Gastrocnemius medialis (tissue), 4 donors: ENCODE measurements at regions of chr6 and their contacts with region 1.

Region 1: GRCh38 chr6:160297310-160297709 is 38.7 kb upstream of the SLC22A2 start:
- DNase-seq: no peak
- ATAC-seq: peak in 1 of 2 donors; percentile 38
- H3K4me3 ChIP-seq: no peak overlapping the region
- H3K27ac ChIP-seq: no peak overlapping the region
- H3K4me1 ChIP-seq: peaks cover 8 to 16% of the 10 kb centered on the region in 2 donors
- H3K27me3 ChIP-seq: no peaks in the 10 kb centered on the region
- CTCF ChIP-seq: peak in 1 of 5 experiments; percentile 42
- POLR2A ChIP-seq: no peak

Region 2: DNA sequence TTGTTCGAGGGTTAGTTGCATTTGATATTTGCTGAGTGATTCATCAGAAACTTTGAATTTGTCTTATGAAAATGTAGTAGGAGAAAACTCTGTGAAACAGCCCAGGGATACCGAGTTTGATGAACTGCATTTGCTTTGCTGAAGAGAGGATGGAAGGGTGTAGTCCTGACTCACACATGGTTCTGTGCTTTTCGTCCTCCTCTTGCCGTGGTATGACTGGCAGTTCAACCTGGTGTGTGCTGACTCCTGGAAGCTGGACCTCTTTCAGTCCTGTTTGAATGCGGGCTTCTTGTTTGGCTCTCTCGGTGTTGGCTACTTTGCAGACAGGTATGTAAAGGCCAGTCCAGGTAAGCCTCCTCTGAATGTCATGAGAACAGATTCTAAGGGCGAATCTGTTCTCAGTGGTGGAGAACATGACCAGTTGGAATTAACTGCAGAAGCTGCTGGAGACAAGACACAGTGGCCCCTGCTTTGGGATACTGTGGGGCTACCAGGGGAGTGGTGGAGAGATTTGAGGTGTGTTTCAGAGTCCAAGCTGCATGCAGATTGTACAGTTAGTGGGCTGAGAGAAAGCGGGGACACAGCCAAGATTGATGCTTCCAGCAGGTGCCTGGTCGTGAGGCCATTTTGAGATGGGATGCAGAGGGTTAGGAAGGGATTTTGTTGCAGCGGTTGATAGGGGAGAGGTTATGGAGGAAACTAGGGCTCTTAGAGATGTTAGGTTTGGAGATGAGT is 167.3 kb before region 1 on chr6:
- in situ Hi-C with region 1: no loop called
- intact Hi-C with region 1: no loop called
- DNase-seq: no peak
- ATAC-seq: no peak
- H3K4me3 ChIP-seq: no peak overlapping the region
- H3K27ac ChIP-seq: no peak overlapping the region
- H3K4me1 ChIP-seq: no peaks in the 10 kb centered on the region
- H3K27me3 ChIP-seq: no peaks in the 10 kb centered on the region
- CTCF ChIP-seq: no peak
- POLR2A ChIP-seq: no peak

Region 3: GRCh38 chr6:160221423-160221822 is 75.9 kb before region 1 on chr6:
- in situ Hi-C with region 1: no loop called
- intact Hi-C with region 1: loop called (anchors 5 kb)
- DNase-seq: no peak
- ATAC-seq: peak; percentile 47 to 74
- H3K4me3 ChIP-seq: no peak overlapping the region
- H3K27ac ChIP-seq: no peak overlapping the region
- H3K4me1 ChIP-seq: no peaks in the 10 kb centered on the region
- H3K27me3 ChIP-seq: peaks cover 0 to 6% (median 0%) of the 10 kb centered on the region in 3 donors
- CTCF ChIP-seq: peak in 4 of 5 experiments; percentile 12 to 28 (median 23)
- POLR2A ChIP-seq: no peak

Region 4: GRCh38 chr6:160275511-160276003 is 21.8 kb before region 1 on chr6:
- in situ Hi-C with region 1: no loop called
- intact Hi-C with region 1: no loop called
- DNase-seq: peak; percentile 82 to 95
- ATAC-seq: peak; percentile 89 to 90
- H3K4me3 ChIP-seq: no peak overlapping the region
- H3K27ac ChIP-seq: peak overlapping the region; percentile 77 to 86 (median 80)
- H3K4me1 ChIP-seq: peaks cover 30 to 31% of the 10 kb centered on the region in 2 donors
- H3K27me3 ChIP-seq: no peaks in the 10 kb centered on the region
- CTCF ChIP-seq: no peak
- POLR2A ChIP-seq: peak; percentile 18 to 47

Region 5: DNA sequence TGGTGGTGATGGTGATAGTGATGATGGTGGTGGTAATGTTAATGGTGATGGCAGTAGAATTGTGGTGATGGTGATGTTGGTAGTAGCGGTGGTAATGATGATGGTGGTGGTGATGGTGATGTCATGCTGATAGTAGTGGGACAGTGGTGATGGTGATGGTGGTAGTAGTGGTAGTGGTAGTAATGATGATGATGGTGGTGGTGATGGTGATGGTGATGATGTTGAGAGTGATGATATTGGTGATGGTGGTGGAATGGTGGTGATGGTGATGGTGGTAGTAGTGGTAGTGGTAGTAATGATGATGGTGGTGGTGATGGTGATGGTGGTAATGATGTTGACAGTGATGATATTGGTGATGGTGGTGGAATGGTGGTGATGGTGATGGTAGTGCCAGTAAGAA is 238.0 kb after region 1 on chr6:
- in situ Hi-C with region 1: no loop called
- intact Hi-C with region 1: no loop called
- DNase-seq: no peak
- ATAC-seq: no peak
- H3K4me3 ChIP-seq: no peak overlapping the region
- H3K27ac ChIP-seq: no peak overlapping the region
- H3K4me1 ChIP-seq: peaks cover 0 to 3% of the 10 kb centered on the region in 2 donors
- H3K27me3 ChIP-seq: peaks cover 0 to 3% (median 0%) of the 10 kb centered on the region in 3 donors
- CTCF ChIP-seq: no peak
- POLR2A ChIP-seq: no peak

Region 6: DNA sequence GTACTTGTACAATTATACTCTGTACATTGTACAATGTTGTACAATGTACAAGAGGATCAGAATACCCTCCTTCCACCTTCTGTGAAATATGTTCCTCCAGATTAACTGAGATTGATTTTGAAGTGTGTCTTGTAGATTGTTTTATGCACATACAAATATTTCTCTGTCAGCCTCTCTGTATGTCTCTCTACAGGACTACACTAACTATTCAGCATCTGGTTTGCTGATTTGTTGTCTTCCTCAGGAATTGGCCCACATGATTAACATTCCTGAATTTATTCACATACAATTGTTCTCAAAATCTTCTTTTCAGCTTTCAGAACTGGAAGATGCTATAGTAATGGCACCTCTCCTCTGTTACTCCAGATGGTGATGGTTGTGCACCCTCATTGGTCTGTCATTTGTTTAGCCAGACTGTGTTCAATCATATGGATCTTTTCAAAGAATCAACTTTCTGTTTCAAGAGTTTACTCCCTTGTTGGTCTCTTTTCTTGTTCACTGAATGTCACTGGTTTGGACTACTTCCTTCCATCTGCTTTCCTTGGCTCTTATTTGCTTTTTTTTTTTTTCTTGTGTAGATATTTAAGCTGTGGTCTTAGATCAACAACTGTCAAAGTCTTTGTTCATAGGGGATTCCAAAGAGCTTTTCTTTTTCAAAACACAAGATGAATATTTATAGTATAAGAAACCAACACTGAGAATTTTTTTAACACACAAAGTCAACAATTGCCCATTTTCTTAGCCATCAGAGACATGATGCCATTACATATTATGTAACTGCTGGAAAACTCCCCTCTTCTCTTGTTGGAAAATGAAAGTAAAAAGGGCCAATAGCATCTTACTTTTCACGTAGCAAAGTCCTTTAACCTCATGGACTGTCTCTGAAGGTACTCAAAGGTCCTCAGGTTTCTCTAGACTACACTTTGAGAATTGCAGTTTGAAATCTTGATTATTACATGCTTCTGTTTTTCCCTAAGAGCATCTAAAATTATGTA is 298.8 kb after region 1 on chr6:
- in situ Hi-C with region 1: no loop called
- intact Hi-C with region 1: no loop called
- DNase-seq: no peak
- ATAC-seq: no peak
- H3K4me3 ChIP-seq: no peak overlapping the region
- H3K27ac ChIP-seq: no peak overlapping the region
- H3K4me1 ChIP-seq: no peaks in the 10 kb centered on the region
- H3K27me3 ChIP-seq: no peaks in the 10 kb centered on the region
- CTCF ChIP-seq: no peak
- POLR2A ChIP-seq: no peak